ENCODE measurements at regions of chr5 and their contacts with region 1.

Region 1: GRCh38 chr5:36414869-36415282 is 113.2 kb upstream of the RANBP3L start:
- DNase-seq: peak in 1 of 2 donors; percentile 66
- H3K4me3 ChIP-seq: no peak overlapping the region
- H3K27ac ChIP-seq: no peak overlapping the region
- H3K4me1 ChIP-seq: peaks cover 0 to 4% (median 0%) of the 10 kb centered on the region in 4 donors
- H3K27me3 ChIP-seq: no peaks in the 10 kb centered on the region
- CTCF ChIP-seq: peak in 5 of 7 experiments; percentile 11 to 43 (median 28)
- EP300 ChIP-seq: no peak
- POLR2A ChIP-seq: no peak

Region 2: DNA sequence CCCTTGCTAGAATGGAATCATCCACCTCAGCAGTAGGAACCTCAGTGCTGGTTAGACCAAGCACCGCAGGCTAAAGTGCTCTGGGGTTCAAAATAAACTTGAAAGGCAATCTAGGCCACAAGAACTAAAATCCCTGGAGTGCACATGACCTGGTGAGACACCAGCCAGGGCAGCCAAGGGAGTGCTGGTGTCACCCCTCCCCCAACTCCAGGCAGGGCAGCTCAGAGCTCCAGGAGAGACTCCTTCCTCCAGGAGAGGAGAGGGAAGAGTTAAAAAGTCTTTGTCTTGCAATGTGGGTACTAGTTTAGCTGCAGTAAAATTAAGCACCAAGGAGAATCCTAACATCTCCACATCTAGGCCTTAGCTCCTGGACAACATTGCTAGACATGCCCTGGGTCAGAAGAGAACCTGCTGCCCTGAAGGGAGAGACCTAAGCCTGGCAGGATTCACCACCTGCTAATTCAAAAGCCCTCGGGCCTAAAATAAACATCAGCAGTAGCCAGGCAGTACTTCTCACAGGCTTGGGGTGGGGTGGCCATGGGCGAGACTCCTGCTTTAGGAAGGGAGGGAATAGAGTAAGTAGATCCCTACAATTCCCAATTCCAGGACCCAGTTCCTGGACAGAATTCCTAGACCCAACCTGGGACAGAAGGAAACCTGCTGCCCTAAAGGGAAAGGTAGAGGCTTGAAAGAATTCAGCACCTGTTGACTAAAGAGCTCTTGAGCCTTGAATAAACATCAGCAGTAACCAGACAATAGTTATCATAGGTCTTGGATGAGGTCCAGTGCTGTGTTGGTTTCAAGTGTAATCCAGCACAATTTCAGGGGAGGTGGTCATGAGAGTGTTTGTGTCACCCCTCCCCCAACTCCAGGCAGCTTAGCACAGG is 374.0 kb before region 1 on chr5:
- intact Hi-C with region 1: no loop called
- DNase-seq: peak in 1 of 2 donors; percentile 24
- H3K4me3 ChIP-seq: no peak overlapping the region
- H3K27ac ChIP-seq: no peak overlapping the region
- H3K4me1 ChIP-seq: no peaks in the 10 kb centered on the region
- H3K27me3 ChIP-seq: no peaks in the 10 kb centered on the region
- CTCF ChIP-seq: no peak
- EP300 ChIP-seq: no peak
- POLR2A ChIP-seq: no peak

Region 3: DNA sequence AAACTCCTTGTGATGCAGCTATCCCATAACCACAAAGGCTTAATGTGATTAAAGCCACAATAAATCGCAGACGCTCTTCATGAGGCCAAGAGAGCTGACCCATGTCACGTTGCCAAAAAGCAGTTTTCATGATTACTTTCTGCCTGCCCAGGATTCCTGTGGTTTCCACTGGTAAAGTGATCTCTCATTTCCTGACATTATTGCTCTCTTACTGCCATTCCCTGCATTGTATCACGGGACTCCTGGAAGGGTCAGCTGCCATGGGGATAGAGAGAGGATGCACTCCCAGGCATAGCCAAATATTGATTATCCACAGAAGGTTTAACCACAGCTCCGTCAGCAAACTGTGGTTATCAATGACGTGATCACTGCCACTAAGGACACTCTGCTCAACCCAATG is 87.7 kb after region 1 on chr5:
- intact Hi-C with region 1: loop called (anchors 5 kb)
- DNase-seq: no peak
- H3K4me3 ChIP-seq: no peak overlapping the region
- H3K27ac ChIP-seq: no peak overlapping the region
- H3K4me1 ChIP-seq: peaks cover 0 to 7% (median 3%) of the 10 kb centered on the region in 4 donors
- H3K27me3 ChIP-seq: no peaks in the 10 kb centered on the region
- CTCF ChIP-seq: no peak
- EP300 ChIP-seq: no peak
- POLR2A ChIP-seq: no peak

Region 4: GRCh38 chr5:36690041-36690961 is 275.4 kb after region 1 on chr5:
- intact Hi-C with region 1: loop called (anchors 5 kb)
- DNase-seq: peak; percentile 82 to 90
- H3K4me3 ChIP-seq: peak overlapping the region; percentile 49 to 62 (median 51)
- H3K27ac ChIP-seq: peak overlapping the region in 4 of 5 donors; percentile 10 to 78 (median 72)
- H3K4me1 ChIP-seq: peaks cover 5 to 26% (median 16%) of the 10 kb centered on the region in 4 donors
- H3K27me3 ChIP-seq: peaks cover 0 to 10% (median 9%) of the 10 kb centered on the region in 3 donors
- CTCF ChIP-seq: peak in 5 of 7 experiments; percentile 60 to 84 (median 81)
- EP300 ChIP-seq: no peak
- POLR2A ChIP-seq: no peak

Measured in stomach (tissue), 19 donors.